Endothelial cell of umbilical vein (primary cell): ENCODE measurements at regions of chr1 and their contacts with region 1.

Region 1: GRCh38 chr1:116570358-116571200 is at the start of gene CD58:
- DNase-seq: peak; percentile 83
- H3K4me3 ChIP-seq: peak within 1 kb of the TSS; percentile 64 to 93 (median 69)
- H3K27ac ChIP-seq: peak within 1 kb of the TSS; percentile 70
- H3K4me1 ChIP-seq: peaks cover 9% of the 10 kb centered on the region
- H3K27me3 ChIP-seq: peaks cover 6% of the 10 kb centered on the region in 2 experiments
- CTCF ChIP-seq: peak; percentile 75
- POLR2A ChIP-seq: peak; percentile 81
- total RNA-seq, gene CD58: 9.8 and 12.3 TPM in 2 replicates

Region 2: GRCh38 chr1:116033322-116033721 is 537.3 kb before region 1 on chr1:
- CTCF ChIA-PET with region 1: no interaction called
- POLR2A ChIA-PET with region 1: no interaction called
- dilution Hi-C with region 1: no loop called
- intact Hi-C with region 1: no loop called
- DNase-seq: no peak
- H3K4me3 ChIP-seq: no peak overlapping the region
- H3K27ac ChIP-seq: no peak overlapping the region
- H3K4me1 ChIP-seq: no peaks in the 10 kb centered on the region
- H3K27me3 ChIP-seq: no peaks in the 10 kb centered on the region
- CTCF ChIP-seq: no peak
- POLR2A ChIP-seq: no peak

Region 3: GRCh38 chr1:116151739-116152576 is 418.6 kb before region 1 on chr1:
- CTCF ChIA-PET with region 1: no interaction called
- POLR2A ChIA-PET with region 1: no interaction called
- dilution Hi-C with region 1: no loop called
- intact Hi-C with region 1: loop called (anchors 5 kb)
- DNase-seq: peak; percentile 78
- H3K4me3 ChIP-seq: peak overlapping the region; percentile 34 to 42 (median 37)
- H3K27ac ChIP-seq: peak overlapping the region; percentile 84
- H3K4me1 ChIP-seq: peaks cover 16% of the 10 kb centered on the region
- H3K27me3 ChIP-seq: peaks cover 5 to 9% of the 10 kb centered on the region in 2 experiments
- CTCF ChIP-seq: peak; percentile 88 to 90
- POLR2A ChIP-seq: no peak

Region 4: GRCh38 chr1:116310180-116310579 is 260.4 kb before region 1 on chr1:
- CTCF ChIA-PET with region 1: no interaction called
- POLR2A ChIA-PET with region 1: no interaction called
- dilution Hi-C with region 1: no loop called
- intact Hi-C with region 1: no loop called
- DNase-seq: no peak
- H3K4me3 ChIP-seq: no peak overlapping the region
- H3K27ac ChIP-seq: no peak overlapping the region
- H3K4me1 ChIP-seq: no peaks in the 10 kb centered on the region
- H3K27me3 ChIP-seq: no peaks in the 10 kb centered on the region
- CTCF ChIP-seq: no peak
- POLR2A ChIP-seq: no peak

Region 5: DNA sequence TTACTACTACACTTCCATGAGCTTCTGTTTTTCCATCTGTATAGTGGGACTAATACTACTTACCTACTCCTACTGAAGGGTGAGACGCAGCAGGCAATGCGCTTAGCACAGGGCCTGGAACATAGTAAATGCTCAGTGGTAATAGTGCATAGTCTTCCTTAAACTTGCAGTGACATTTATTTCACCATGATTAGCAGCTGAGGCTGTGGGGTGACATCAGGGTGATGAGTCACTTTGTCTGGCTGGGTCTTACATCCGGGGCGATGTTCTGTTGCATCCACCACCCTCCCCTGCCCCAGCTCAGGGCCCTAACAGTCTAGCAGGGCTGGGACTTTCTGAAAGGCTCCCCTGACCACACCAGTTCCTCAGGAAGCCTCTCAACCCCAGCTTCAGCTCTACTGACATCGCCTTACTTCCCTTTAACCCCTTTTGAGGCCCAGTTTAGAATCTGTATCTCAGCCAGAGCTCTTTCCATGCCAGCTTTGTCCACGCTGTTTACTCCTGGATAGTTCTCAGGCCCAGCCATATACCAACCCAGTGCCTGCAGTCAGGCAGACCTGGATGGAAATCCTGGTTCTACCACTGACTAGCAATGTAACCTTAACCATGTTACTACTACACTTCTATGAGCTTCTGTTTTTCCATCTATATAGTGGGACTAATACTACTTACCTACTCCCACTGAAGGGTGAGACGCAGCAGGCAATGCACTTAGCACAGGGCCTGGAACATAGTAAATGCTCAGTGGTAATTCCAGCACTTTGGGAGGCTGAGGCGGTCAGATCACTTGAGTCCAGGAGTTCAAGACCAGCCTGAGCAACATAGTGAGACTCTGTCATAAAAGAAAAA is 66.0 kb before region 1 on chr1:
- CTCF ChIA-PET with region 1: interaction called, 6 read pairs
- POLR2A ChIA-PET with region 1: no interaction called
- dilution Hi-C with region 1: no loop called
- intact Hi-C with region 1: loop called (anchors 10 kb)
- DNase-seq: no peak
- H3K4me3 ChIP-seq: no peak overlapping the region
- H3K27ac ChIP-seq: no peak overlapping the region
- H3K4me1 ChIP-seq: peaks cover 22% of the 10 kb centered on the region
- H3K27me3 ChIP-seq: no peaks in the 10 kb centered on the region
- CTCF ChIP-seq: no peak
- POLR2A ChIP-seq: no peak

Region 6: DNA sequence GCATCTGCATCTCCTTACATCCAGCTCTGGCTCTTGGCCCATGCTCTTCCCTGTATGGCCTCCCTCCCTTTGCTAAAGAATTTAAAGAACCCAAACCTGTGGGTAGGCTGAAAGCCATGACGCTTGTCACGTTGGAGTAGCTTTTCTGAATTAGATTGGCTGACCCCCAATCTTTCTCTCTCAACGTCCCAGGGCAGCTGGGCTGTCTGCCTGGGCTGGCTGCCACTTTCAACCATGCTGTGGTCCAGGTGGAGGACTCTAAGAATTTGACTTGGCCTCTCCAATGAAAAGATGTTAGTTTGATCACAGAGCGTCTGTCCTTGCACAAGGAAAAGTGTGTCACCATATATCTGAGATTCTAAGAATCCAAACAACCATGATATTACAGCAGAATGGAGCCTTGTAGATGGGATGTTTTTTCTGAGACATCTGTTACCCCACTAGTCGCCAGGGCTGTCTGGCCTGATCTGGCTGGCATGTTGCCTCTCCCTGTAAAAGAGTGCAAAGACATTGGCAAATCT is 103.5 kb after region 1 on chr1:
- CTCF ChIA-PET with region 1: interaction called, 41 read pairs
- POLR2A ChIA-PET with region 1: no interaction called
- dilution Hi-C with region 1: no loop called
- intact Hi-C with region 1: loop called (anchors 1 kb)
- DNase-seq: no peak
- H3K4me3 ChIP-seq: no peak overlapping the region
- H3K27ac ChIP-seq: no peak overlapping the region
- H3K4me1 ChIP-seq: no peaks in the 10 kb centered on the region
- H3K27me3 ChIP-seq: peaks cover 0 to 7% of the 10 kb centered on the region in 2 experiments
- CTCF ChIP-seq: no peak
- POLR2A ChIP-seq: no peak

Region 7: DNA sequence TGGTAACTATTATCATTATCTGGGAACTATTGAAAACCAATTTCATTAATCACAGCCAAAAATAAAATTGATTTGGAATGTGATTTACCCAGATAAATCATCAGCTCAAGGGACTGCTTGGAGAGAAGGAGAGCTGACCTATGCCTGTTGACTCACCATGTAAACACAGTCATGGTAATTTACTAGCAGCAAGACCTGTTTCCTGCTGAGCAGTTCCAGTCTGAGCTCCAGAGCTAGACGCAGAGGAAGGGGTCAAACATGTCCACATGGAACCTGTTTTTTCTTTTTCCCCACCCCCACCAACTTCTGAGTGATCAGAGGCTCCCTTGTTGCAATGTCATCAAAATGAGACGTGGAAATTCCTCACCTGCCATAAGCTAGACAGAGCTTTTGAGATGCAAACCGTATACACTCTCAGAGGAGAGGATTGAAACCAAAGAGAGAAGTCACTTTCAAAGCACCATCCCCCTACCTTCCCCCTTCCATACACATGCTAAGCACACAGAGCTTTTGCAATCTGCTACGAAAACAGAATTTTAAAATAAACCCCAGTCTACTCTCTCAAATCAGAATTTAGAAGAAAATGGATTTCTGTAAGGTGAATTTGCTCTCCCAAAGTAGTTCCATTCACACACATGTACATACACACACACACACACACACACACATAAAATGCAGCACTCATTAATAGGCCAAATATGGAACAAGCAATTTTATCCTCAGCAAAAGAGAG is 283.3 kb after region 1 on chr1:
- CTCF ChIA-PET with region 1: no interaction called
- POLR2A ChIA-PET with region 1: no interaction called
- dilution Hi-C with region 1: no loop called
- intact Hi-C with region 1: loop called (anchors 10 kb)
- DNase-seq: peak; percentile 94
- H3K4me3 ChIP-seq: no peak overlapping the region
- H3K27ac ChIP-seq: peak overlapping the region; percentile 72
- H3K4me1 ChIP-seq: peaks cover 30% of the 10 kb centered on the region
- H3K27me3 ChIP-seq: no peaks in the 10 kb centered on the region
- CTCF ChIP-seq: no peak
- POLR2A ChIP-seq: peak; percentile 3